Activated naive CD4-positive, alpha-beta T cell treated with anti-CD3 and anti-CD28 coated beads, Interleukin-2, amount 10 ng/mL, durations not matched to agents 7 days and 5 days (primary cell): ENCODE measurements at regions of chrX and their contacts with region 1.

Region 1: DNA sequence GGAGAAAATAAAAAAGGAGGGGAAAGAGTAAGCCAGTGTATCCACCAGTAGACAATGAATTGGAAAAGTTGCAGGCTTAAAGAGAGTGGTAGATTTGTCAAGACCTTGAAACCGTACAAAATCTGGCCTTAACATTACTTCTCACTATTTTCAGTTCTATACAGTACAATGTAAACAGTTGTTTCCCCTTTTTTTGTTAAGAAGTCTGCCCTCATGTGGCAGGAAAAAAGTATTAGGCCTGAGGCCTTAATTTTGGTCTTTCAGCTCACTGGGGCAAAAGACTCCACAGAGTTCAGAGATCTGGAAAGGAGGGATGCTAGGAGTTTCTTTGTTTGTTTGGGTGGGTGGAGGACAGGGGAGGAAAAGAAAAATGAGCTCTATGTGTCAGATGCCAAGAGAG is 92.8 kb upstream of the CCDC160 start:
- DNase-seq: peak; percentile 24
- H3K4me3 Mint-ChIP-seq: no peak overlapping the region
- H3K27ac Mint-ChIP-seq: peak overlapping the region; percentile 80
- H3K4me1 Mint-ChIP-seq: peaks cover 5% of the 10 kb centered on the region
- H3K27me3 Mint-ChIP-seq: no peaks in the 10 kb centered on the region

Region 2: GRCh38 chrX:133897593-133898163 is 246.6 kb before region 1 on chrX:
- CTCF ChIA-PET with region 1: no interaction called
- DNase-seq: no peak
- H3K4me3 Mint-ChIP-seq: no peak overlapping the region
- H3K27ac Mint-ChIP-seq: no peak overlapping the region
- H3K4me1 Mint-ChIP-seq: no peaks in the 10 kb centered on the region
- H3K27me3 Mint-ChIP-seq: no peaks in the 10 kb centered on the region

Region 3: DNA sequence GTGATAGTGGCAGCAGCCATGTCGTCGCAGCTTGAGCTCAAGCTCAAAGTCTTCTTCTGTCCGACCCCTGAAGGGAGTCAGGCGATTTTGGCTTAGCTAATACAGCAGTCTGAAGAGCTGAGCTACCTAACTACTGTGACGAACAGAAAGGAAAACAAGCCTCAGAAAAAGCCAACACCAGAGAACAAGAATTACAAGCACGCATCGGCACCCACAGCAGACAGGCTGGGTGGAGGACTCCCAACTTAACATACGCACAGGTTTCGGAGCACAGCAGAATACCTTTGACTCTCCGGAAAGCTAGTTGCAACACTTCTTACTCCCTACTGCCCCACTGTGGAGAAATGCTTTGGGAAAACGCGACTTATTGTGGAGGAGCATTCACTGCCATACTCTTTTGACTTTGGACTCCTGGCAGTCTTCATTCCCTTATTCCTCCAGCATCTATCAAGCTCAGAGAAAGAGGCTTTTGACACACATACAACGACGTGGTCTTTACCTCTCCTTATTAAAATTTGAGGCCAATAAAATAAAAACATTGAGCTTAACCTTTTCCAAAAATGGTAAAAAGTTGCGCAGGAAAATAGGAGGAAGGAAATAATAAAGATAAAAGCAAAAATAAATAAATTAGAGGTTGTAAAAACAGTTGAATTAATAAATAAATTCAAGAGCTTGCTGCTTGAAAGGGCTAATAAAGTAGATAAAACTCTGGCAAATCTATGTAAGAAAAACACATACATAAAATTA is 117.5 kb before region 1 on chrX:
- CTCF ChIA-PET with region 1: interaction called, 12 read pairs
- DNase-seq: peak; percentile 56
- H3K4me3 Mint-ChIP-seq: peak overlapping the region; percentile 18
- H3K27ac Mint-ChIP-seq: no peak overlapping the region
- H3K4me1 Mint-ChIP-seq: peaks cover 13% of the 10 kb centered on the region
- H3K27me3 Mint-ChIP-seq: no peaks in the 10 kb centered on the region

Region 4: GRCh38 chrX:134186362-134187121 is 42.3 kb after region 1 on chrX:
- CTCF ChIA-PET with region 1: interaction called, 14 read pairs
- DNase-seq: peak; percentile 79
- H3K4me3 Mint-ChIP-seq: peak overlapping the region; percentile 72
- H3K27ac Mint-ChIP-seq: peak overlapping the region; percentile 93
- H3K4me1 Mint-ChIP-seq: peaks cover 48% of the 10 kb centered on the region
- H3K27me3 Mint-ChIP-seq: no peaks in the 10 kb centered on the region

Region 5: DNA sequence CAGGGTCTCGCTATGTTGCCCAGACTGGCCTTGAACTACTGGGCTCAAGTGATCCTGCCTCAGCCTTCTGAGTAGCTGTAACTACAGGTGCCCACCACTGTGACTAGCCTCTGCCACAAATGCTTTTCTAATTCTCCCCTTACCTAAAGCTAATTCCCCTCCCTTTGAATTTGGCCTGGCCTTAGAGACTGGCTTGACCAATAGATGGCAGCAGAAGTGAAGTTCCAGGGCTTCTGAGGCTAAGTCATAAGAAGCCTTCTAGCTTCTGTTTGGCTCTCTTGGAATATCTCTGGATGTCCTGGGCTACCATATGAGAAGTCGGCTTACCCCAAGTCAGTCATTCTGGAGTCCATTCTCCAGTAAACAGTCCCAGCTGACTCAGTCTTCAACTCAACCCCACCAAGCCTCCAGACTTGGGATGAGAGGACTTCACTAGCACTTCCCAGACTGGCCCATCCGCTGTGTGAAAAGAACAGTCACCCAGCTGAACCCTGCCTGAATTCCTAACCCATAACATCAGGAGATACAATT is 376.7 kb after region 1 on chrX:
- CTCF ChIA-PET with region 1: no interaction called
- DNase-seq: peak; percentile 25
- H3K4me3 Mint-ChIP-seq: no peak overlapping the region
- H3K27ac Mint-ChIP-seq: no peak overlapping the region
- H3K4me1 Mint-ChIP-seq: peaks cover 6% of the 10 kb centered on the region
- H3K27me3 Mint-ChIP-seq: no peaks in the 10 kb centered on the region